A673 (cell line): ENCODE measurements at regions of chr10 and their contacts with region 1.

Region 1: DNA sequence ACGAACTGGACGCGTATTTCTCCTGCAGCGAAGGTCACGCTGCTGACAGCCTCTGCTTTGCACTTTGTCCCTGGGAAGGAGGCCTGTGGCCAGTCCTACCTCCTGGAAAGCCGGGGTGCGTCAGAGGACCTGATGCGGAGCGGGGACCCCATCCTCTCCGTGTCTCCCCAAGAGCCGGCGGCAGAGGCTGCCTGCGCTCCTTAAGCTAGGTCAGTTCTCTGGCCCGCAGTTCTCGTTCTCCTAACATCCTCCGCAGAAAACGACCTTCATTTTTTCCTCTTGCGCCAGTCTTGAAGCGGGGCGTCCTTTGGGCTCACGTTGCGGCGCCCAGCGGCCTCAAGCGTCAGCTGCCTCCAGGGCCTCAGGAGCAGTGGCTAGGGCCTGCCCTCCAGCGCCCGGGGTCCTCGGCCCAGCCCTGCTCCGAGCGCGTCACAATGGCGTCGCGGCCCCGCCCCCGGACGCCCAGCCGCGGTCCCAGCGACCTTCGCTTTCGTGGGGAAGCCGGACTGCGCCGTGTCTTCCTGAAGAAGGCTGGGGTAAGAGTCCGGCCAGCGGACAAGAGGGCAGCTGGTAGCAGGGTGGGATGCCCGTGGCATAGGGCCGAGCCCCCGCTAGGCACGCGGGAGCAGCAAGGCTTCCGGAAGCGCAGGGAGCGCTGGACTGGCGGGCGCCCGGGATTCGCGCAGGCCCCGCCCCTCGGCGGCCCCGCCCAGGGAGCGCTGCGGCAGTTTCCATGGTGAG is at the start of gene ZNF487:
- DNase-seq: peak; percentile 86
- H3K4me3 ChIP-seq: peak within 1 kb of the TSS; percentile 84
- H3K27ac ChIP-seq: peak within 1 kb of the TSS; percentile 81
- H3K4me1 ChIP-seq: peaks cover 8% of the 10 kb centered on the region
- H3K27me3 ChIP-seq: no peaks in the 10 kb centered on the region
- CTCF ChIP-seq: no peak
- total RNA-seq, gene ZNF487: 1.3 and 2.8 TPM in 2 replicates

Region 2: DNA sequence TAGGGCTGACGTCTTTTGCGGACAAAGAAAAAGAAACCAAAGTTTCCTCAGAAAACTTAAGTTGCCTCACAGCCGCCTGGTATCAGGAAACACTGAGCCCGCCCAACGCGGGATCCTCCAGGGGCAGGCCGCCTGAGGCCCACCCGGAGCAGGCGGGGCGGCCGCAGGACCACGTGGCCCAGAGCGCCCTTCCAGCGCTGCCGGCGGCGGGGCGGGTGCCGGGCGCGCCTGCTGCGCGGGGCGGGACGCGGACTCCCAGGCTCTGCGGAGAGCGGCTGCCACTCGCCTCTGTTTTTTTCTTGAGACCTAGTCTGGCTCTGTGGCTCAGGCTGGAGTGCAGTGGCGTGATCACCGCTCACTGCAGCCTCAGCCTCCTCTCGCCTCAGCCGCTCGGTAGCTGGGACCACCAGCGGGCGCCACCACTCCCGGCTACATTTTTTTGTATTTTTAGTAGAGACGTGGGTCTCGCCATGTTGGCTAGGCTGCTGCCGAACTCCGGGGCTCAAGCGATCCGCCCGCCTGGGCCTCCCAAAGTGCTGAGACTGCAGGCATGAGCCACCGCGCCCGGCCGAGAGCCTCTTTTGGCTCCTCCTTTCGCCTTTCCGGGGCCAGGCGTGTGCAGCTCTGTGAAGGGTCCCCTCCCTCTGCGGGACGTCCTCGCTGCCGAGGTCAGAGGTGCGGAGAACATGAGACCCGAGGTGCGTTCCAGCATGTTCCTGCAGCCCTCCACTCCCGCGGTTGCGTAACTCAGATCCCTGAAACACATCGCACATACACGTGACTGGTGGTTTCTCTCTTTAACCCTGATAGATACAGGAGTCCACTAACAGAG is 16.0 kb before region 1 on chr10:
- CTCF ChIA-PET with region 1: no interaction called
- POLR2A ChIA-PET with region 1: no interaction called
- intact Hi-C with region 1: loop called (anchors 2 kb)
- DNase-seq: peak; percentile 93
- H3K4me3 ChIP-seq: peak overlapping the region; percentile 50
- H3K27ac ChIP-seq: peak overlapping the region; percentile 91
- H3K4me1 ChIP-seq: peaks cover 13% of the 10 kb centered on the region
- H3K27me3 ChIP-seq: no peaks in the 10 kb centered on the region
- CTCF ChIP-seq: peak; percentile 27; the same call in 1 of the 2 replicates